MCF 10A (cell line): ENCODE measurements at regions of chr20 and their contacts with region 1.

Region 1: GRCh38 chr20:17654649-17655285 is 27.3 kb downstream of the RRBP1 start:
- DNase-seq: peak; percentile 39
- H3K4me3 Mint-ChIP-seq: no peak overlapping the region
- H3K27ac Mint-ChIP-seq: no peak overlapping the region
- H3K4me1 Mint-ChIP-seq: peaks cover 15% of the 10 kb centered on the region
- H3K27me3 Mint-ChIP-seq: no peaks in the 10 kb centered on the region
- CTCF ChIP-seq: peak; percentile 44

Region 2: DNA sequence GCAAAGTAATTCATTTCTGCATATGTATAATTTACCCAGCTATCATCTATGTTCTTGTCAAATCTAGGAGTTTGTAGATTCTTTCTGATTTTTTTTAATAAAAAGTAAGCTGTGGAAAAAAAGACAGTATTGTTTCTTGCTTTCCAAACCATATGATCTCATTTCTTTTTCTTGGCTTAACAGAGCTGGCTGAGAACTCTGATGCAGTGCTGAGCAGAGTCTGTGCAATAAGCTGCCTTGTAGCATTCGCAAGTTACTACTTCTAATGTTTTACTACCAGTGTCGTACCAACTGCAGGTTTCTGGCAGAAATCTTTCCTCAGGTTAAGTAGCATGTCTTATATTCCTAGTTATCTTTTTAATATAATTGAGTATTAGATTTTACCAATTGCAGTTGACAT is 11.7 kb after region 1 on chr20:
- CTCF ChIA-PET with region 1: interaction called, 25 read pairs
- POLR2A ChIA-PET with region 1: no interaction called
- intact Hi-C with region 1: no loop called
- DNase-seq: no peak
- H3K4me3 Mint-ChIP-seq: no peak overlapping the region
- H3K27ac Mint-ChIP-seq: no peak overlapping the region
- H3K4me1 Mint-ChIP-seq: peaks cover 29% of the 10 kb centered on the region
- H3K27me3 Mint-ChIP-seq: no peaks in the 10 kb centered on the region
- CTCF ChIP-seq: no peak

Region 3: DNA sequence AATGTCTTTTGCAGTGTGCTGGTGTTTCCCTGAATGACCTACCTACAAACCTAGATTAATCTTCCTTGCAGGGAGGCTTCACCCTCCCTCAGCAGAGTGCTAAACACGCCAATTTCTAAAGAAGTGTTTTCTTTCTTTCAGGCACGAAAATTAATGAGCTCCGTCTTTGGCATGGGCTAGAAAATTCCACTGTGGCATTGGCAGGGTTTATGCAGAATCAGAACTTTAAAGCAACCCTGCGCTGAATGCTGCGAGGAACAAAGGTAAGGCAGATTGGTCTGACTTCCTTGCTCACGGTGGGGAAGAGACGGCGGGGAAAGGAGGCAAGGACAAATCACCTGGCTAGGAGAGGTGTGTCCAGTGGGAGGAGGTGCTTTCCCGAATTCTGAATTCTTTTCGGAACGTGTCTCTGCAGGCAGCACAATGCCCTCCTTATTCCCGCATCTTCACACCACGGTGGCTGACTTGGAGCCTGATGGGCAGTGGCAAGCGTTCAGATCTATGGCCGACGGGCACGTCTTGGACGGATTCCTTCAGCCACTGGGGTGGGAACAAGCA is 38.8 kb after region 1 on chr20:
- CTCF ChIA-PET with region 1: no interaction called
- POLR2A ChIA-PET with region 1: no interaction called
- intact Hi-C with region 1: no loop called
- DNase-seq: no peak
- H3K4me3 Mint-ChIP-seq: no peak overlapping the region
- H3K27ac Mint-ChIP-seq: no peak overlapping the region
- H3K4me1 Mint-ChIP-seq: no peaks in the 10 kb centered on the region
- H3K27me3 Mint-ChIP-seq: peaks cover 15% of the 10 kb centered on the region
- CTCF ChIP-seq: no peak